ENCODE measurements at regions of chr3 and their contacts with region 1.

Region 1: GRCh38 chr3:185983495-185984141 is 45.8 kb upstream of the TRA2B start:
- DNase-seq: peak; percentile 78
- CTCF ChIP-seq: peak; percentile 95

Region 2: DNA sequence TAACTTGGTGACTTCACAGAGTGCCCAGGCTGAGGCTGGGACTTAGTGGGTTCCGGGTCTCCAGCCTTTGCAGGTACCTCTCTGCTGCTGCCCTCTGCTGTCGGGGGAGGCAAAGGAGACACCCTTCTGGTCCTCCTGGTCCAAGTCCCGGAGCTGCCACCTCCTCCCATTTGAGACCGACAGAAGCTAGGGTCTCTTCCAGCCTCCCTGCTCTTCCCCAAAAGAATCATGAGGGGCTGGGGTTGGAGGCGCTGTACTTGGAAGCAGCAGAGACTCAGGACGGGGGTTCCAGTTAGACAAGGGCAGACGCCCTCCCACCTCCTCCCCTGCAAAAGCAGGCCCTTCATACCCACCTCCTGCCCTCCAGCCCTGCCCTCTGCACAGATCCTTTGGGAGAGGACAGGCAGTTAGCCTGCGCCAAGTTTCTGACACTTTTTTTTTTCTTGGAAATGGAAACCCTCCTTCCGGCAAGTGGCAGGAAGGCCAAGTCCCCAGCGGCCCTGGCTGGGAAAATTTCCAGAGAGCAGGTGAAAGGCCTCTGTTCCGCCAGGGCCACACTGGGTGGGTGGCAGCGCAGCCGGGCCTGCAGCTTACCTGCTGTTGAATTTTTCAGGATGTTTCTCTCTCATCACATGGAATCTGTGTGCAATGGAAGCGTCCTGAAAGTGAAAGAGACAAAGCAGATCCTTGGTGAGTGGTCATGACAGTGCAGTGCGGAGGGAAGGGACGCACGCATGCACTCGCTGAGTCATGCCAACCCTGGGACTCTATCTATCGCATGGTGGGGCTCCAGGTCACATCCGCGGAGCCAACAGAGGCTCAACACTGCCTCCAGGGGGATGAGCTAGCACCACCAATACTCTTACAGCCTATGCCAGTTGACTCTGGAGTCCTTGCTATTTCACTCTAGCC is 258.5 kb after region 1 on chr3:
- in situ Hi-C with region 1: loop called (anchors 5 kb)
- DNase-seq: peak; percentile 80
- CTCF ChIP-seq: peak; percentile 65

Region 3: DNA sequence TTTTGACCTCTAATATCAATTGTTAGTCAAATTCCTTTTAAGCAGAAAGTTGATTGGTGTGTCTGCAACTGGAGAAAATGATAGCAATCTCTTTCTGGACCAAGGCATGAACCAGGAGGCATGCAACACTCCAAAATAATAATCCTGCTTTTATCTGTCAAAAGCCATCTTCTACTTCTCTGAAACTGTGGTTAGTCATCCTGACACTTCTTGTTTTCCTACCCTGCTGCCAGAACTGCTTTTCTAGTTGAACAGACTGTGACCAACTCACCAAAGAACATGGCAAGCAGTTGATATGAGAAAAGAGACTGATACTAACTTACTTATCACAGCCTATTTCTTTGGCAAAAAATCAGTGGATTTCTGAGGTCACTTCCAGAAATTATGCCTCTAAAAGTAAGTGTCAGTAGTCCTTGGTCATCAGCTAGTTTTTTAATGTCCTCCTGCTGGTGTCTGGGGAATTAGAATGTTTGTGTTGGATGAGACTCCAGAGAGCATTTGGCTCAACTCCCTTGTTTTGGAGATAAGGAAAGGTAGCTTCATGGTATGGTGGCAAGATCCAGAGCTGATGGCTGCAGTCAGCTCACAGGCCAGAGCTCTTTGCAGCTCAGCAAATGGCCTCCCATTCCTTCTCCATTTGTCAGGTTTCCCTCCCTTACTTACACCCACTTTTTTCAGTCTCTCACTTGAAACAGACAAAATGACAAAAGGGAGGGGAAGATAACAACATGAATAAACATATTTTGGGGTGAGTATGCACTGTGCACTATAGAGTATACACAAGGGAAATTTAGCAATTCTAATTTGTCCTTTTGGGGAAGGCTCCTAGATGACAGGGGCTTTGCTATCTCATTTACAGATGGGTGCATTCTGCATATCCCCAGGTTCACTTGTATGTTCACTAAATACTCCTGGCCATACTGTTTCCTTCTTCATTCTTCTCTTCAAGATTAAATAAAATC is 553.5 kb after region 1 on chr3:
- in situ Hi-C with region 1: loop called (anchors 5 kb)
- DNase-seq: no peak
- CTCF ChIP-seq: no peak